Spleen (tissue), 13 donors: ENCODE measurements at regions of chrX and their contacts with region 1.

Region 1: DNA sequence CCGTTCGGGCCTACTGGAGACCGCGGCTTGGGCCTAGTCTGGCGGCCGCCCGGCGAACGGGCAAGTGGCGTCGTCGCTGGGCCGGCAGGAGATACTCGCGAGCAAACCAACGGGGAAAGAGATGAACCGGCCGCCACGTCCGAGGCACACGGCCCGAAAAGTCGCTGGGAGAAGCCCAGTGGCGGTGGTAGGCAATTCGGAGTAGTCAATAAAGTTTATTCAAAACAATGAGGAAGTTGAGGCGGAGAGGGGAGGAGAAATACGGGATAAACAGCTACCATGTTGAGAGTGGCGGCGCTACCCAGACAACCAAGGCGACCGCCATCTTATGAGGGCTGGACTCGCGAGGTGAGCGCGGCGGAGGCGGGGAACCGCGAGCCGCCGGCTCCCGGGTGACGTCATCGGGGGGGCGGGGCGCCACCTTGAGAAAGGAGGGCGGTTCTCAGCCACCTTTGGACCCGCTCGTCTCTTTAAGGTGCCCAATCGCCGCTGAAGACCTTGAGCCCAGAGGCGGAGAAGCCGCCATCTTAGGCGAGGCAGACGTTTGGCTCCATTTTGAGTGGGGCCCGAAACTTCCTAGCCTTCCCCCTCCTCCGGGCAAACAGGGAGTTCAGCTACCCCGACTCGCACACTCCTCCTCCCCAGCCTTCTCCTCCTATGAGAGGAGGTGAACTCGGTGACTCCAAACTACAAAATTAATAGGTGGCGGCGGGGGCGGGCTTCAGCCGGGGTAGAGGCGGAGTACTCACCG is at the start of gene PHF8:
- DNase-seq: peak; percentile 98
- H3K4me3 ChIP-seq: peak within 1 kb of the TSS; percentile 52 to 76 (median 56)
- H3K27ac ChIP-seq: peak within 1 kb of the TSS; percentile 84 to 98 (median 95)
- H3K4me1 ChIP-seq: peaks cover 0 to 23% (median 9%) of the 10 kb centered on the region in 6 donors
- H3K27me3 ChIP-seq: no peaks in the 10 kb centered on the region
- CTCF ChIP-seq: peak in 2 of 11 experiments; percentile 8 to 18
- POLR2A ChIP-seq: no peak
- total RNA-seq, gene PHF8: 28.5 to 53.5 (median 40.0) TPM

Region 2: GRCh38 chrX:54182864-54183608 is 138.7 kb after region 1 on chrX and contains the start of gene FAM120C:
- intact Hi-C with region 1: loop called (anchors 10 kb)
- DNase-seq: peak; percentile 87
- H3K4me3 ChIP-seq: peak within 1 kb of the TSS; percentile 70 to 96 (median 82)
- H3K27ac ChIP-seq: peak within 1 kb of the TSS; percentile 70 to 93 (median 88)
- H3K4me1 ChIP-seq: peaks cover 15 to 47% (median 26%) of the 10 kb centered on the region in 6 donors
- H3K27me3 ChIP-seq: no peaks in the 10 kb centered on the region
- CTCF ChIP-seq: no peak
- POLR2A ChIP-seq: no peak
- total RNA-seq, gene FAM120C: 6.6 to 15.7 (median 10.8) TPM

Region 3: GRCh38 chrX:54529552-54530357 is 485.5 kb after region 1 on chrX and contains the start of gene GNL3L:
- intact Hi-C with region 1: loop called (anchors 10 kb)
- DNase-seq: peak; percentile 94
- H3K4me3 ChIP-seq: peak within 1 kb of the TSS; percentile 58 to 88 (median 66)
- H3K27ac ChIP-seq: peak within 1 kb of the TSS; percentile 72 to 94 (median 90)
- H3K4me1 ChIP-seq: peaks cover 5 to 38% (median 31%) of the 10 kb centered on the region in 6 donors
- H3K27me3 ChIP-seq: no peaks in the 10 kb centered on the region
- CTCF ChIP-seq: no peak
- POLR2A ChIP-seq: no peak
- total RNA-seq, gene GNL3L: 30.8 to 52.3 (median 40.6) TPM